ENCODE measurements at regions of chr9 and their contacts with region 1.

Region 1: DNA sequence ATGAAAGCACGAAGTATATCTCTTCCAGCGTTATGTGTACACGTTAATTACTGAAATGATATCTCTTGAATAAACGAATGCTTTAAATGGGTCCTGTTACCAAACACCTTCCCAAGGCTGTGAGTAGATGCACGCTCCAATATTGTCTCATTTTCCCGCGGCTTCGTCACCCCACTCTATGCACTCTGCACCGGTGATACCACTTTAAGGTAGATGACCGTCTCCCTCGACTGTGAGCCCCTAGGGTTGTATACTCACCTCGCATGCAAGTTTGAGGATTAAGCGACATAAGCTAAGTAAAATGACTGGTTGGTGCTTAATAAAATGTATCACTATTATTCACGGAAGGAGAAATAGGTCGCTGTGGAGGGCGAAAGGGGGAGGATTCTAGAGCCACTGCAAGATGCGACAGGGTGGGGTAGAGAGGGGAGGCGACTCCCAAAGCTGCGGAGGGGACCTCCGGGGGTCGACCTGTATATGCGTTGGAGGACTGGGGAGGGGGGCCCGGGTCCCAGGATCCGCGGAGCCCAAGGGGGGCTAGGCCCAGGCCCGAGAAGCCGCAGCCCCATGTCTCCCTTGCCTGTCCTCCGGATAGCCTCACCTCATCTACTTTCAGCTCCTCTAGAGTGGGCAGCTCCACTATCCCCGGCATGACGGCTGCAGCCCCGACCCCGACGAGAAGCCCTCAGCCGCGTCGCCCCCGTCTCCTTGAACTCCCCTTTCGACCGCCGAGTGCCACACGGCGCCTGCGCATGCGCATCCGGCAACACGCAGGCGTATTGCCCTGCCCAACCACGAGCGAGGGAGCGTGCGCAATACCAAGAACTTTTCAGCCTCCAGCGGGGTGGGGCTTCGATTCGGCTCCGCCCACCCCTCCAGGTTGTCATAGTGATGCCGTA is at the starts of genes MORN5 and NDUFA8:
- DNase-seq: peak; percentile 94
- H3K4me3 Mint-ChIP-seq: peak within 1 kb of the TSS; percentile 91
- H3K27ac Mint-ChIP-seq: peak within 1 kb of the TSS; percentile 91
- H3K4me1 Mint-ChIP-seq: peaks cover 27% of the 10 kb centered on the region
- H3K27me3 Mint-ChIP-seq: peaks cover 12% of the 10 kb centered on the region
- total RNA-seq, gene MORN5: not detected in 2 replicates
- total RNA-seq, gene NDUFA8: 45.4 and 48.7 TPM in 2 replicates

Region 2: GRCh38 chr9:122092611-122093506 is 66.4 kb before region 1 on chr9 and contains the start of gene TTLL11:
- intact Hi-C with region 1: loop called (anchors 2 kb)
- DNase-seq: peak; percentile 93
- H3K4me3 Mint-ChIP-seq: peak within 1 kb of the TSS; percentile 87
- H3K27ac Mint-ChIP-seq: peak within 1 kb of the TSS; percentile 37
- H3K4me1 Mint-ChIP-seq: peaks cover 19% of the 10 kb centered on the region
- H3K27me3 Mint-ChIP-seq: peaks cover 17% of the 10 kb centered on the region
- total RNA-seq, gene TTLL11: 2.2 and 2.4 TPM in 2 replicates

Region 3: GRCh38 chr9:122125158-122125508 is 34.1 kb before region 1 on chr9:
- intact Hi-C with region 1: loop called (anchors 2 kb)
- DNase-seq: peak; percentile 63
- H3K4me3 Mint-ChIP-seq: no peak overlapping the region
- H3K27ac Mint-ChIP-seq: no peak overlapping the region
- H3K4me1 Mint-ChIP-seq: peaks cover 7% of the 10 kb centered on the region
- H3K27me3 Mint-ChIP-seq: peaks cover 30% of the 10 kb centered on the region

Region 4: DNA sequence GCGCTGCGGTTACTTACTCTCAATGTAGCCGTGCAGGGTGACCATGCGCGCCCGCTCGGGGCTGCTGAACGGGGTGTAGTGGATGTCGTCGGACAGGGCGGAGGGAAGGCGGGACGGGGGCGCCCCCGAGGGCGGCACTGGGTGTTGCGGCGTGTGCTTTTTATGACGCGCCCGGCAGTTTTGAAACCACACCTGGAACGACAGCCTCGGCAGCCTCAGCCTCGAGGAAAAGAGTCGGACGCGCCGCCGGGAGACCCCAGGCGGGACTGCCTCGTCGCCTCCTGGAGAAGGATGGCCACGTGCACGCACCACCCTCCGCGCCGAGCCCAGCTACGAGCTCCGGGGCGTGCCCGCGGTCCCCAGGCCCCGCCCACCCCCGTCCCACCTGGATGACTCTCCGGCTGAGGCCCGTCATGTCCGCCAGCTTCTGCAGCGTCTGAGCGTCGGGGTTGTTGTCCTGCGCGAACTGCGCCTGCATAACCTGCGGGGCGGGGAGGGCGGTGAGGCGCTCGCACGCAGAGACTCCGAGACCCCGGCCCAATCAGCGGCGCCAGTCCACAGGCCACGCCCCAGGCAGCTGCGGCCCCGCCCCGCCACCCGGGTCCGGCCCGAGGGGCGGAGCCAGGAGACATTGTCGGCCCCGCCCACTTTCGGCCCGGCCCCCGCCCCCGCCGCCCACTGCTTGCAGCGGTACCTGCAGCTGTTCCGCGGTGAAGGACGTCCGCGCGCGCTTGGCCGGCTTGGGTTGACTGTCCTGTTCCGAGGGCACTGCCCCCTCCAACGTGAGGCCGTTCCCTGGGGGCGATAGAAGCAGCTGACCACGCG is 54.5 kb after region 1 on chr9:
- intact Hi-C with region 1: no loop called
- DNase-seq: peak; percentile 61
- H3K4me3 Mint-ChIP-seq: peak overlapping the region; percentile 40
- H3K27ac Mint-ChIP-seq: no peak overlapping the region
- H3K4me1 Mint-ChIP-seq: peaks cover 13% of the 10 kb centered on the region
- H3K27me3 Mint-ChIP-seq: peaks cover 62% of the 10 kb centered on the region

Region 5: DNA sequence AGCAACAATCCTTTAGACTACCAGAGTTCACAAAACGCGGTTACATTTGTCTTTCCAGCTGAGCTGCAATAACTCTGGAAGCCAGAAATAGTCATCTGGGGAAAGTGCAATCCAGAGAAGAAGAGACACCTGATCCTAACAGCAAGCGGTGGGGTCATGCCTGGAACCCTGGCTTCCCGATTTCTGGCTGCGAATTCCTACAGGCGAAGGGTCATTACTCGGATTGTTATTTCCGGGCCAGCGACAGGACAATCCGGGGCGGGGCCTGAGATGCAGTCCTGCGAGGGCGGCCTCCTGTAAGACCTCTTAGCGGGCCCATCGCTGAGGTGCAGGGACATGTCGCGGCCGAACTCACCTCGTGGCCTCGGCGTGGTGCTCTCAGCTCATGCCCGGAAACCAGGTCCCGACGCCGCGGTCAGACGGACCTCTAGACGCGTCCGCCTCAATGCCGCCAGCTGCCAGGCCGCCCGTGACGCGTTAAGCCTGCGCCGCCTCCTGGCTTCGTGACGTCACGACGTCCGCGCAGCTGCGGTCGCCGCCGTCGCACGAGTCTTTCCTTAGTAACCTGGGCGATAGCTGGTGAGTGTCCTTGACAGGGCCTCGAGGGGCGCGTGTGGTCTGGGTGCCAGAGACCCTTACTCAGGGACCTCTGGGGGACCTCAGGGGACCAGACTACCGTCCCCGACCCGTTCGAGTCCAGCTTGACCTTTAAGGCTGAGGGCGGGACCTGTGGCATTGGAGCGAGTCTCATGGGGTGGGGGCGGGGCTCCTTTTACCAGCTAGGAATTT is 105.3 kb after region 1 on chr9 and contains the starts of genes MRRF and RBM18:
- intact Hi-C with region 1: loop called (anchors 1 kb)
- DNase-seq: peak; percentile 89
- H3K4me3 Mint-ChIP-seq: peak within 1 kb of the TSS; percentile 97
- H3K27ac Mint-ChIP-seq: peak within 1 kb of the TSS; percentile 99
- H3K4me1 Mint-ChIP-seq: peaks cover 36% of the 10 kb centered on the region
- H3K27me3 Mint-ChIP-seq: no peaks in the 10 kb centered on the region
- total RNA-seq, gene MRRF: 57.0 and 58.8 TPM in 2 replicates
- total RNA-seq, gene RBM18: 19.4 and 21.9 TPM in 2 replicates

Measured in activated T-helper 2 cell treated with anti-CD3 and anti-CD28 coated beads, Interferon-gamma antibody, Interleukin-2, Interleukin-4, amounts not matched to agents 10 μg/mL and 5 μg/mL and 100 μg/mL, durations not matched to agents 14 hours and 24 hours and 36 hours (primary cell).